ENCODE measurements at regions of chr6 and their contacts with region 1.

Region 1: DNA sequence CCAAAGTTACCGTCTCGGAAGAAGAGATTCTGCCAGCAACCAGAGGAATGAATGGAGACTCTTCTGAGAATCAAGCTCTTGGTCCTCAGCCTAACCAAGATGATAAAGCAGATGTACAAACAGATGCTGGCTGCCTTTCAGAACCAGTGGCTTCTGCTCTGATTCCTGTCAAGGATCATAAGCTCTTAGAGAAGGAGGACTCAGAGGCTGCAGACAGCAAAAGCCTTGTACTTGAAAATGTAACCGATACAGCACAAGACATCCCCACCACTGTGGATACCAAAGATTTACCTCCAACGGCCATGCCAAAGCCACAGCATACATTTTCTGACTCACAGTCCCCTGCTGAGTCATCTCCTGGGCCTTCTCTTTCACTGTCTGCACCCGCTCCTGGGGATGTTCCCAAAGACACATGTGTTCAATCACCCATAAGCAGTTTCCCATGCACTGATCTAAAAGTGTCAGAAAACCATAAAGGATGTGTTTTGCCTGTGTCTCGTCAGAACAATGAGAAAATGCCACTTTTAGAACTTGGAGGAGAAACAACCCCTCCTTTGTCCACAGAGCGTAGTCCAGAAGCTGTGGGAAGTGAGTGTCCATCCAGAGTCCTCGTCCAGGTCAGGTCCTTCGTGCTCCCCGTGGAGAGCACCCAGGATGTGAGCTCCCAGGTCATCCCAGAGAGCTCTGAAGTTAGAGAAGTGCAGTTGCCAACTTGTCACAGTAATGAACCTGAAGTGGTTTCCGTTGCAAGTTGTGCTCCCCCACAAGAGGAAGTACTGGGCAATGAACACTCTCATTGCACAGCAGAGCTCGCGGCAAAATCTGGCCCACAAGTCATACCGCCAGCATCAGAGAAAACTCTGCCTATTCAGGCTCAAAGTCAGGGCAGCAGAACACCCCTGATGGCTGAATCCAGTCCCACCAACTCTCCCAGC is 109.6 kb downstream of the RTN4IP1 start:
- DNase-seq: peak; percentile 79
- H3K4me3 Mint-ChIP-seq: peak overlapping the region; percentile 90
- H3K27ac Mint-ChIP-seq: peak overlapping the region; percentile 97
- H3K4me1 Mint-ChIP-seq: peaks cover 57% of the 10 kb centered on the region
- H3K27me3 Mint-ChIP-seq: no peaks in the 10 kb centered on the region

Region 2: DNA sequence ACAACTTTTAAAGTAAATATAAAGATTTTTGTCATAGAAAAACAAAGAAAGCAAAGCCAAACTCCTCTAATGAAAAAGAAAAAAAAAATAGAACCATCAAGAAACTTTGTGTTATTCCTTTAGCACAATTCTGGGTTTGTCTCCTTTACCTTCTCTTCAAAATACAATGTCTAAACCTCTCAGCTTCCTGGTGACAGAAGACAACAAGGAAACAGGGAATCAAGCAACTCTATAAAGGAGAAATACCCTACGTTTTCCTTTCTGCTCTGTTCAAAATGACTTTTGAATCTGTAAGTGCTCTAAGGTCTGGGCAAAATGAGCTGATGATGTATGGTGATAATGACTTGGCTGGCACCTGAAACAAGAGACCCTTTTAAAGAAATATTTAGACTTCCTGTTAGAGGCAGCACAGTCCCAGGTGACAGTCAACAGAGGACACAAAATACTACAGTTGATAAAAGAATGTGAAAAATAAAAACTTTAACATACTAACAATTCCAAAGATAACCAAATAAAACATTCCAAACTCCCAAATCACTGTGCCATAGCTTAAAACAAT is 332.2 kb before region 1 on chr6:
- intact Hi-C with region 1: loop called (anchors 2 kb)
- DNase-seq: no peak
- H3K4me3 Mint-ChIP-seq: peak overlapping the region; percentile 48
- H3K27ac Mint-ChIP-seq: peak overlapping the region; percentile 86
- H3K4me1 Mint-ChIP-seq: peaks cover 68% of the 10 kb centered on the region
- H3K27me3 Mint-ChIP-seq: no peaks in the 10 kb centered on the region

Region 3: GRCh38 chr6:106488494-106489370 is 31.0 kb before region 1 on chr6:
- intact Hi-C with region 1: no loop called
- DNase-seq: no peak
- H3K4me3 Mint-ChIP-seq: no peak overlapping the region
- H3K27ac Mint-ChIP-seq: no peak overlapping the region
- H3K4me1 Mint-ChIP-seq: peaks cover 2% of the 10 kb centered on the region
- H3K27me3 Mint-ChIP-seq: peaks cover 11% of the 10 kb centered on the region

Region 4: DNA sequence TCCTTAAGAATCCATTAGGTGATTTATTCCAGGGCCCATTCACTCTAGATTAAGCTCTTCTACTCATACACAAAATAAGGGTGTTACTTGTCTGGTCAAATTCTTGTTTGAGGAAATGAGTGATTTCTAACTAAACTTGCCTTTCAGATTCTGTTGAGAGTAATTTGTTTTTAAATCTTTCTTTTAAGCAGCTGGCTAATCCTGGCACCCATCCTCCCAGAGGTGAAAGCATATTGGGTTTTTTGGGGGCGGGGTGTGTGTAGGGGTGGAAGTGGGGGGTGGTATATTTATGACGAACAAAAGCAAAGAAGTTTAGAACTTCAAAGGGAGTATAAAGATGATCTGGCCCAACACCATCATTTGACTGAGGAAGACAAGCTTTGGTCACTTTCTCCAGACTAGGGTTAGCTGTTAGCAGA is 14.8 kb after region 1 on chr6:
- intact Hi-C with region 1: loop called (anchors 1 kb)
- DNase-seq: no peak
- H3K4me3 Mint-ChIP-seq: peak overlapping the region; percentile 9
- H3K27ac Mint-ChIP-seq: peak overlapping the region; percentile 82
- H3K4me1 Mint-ChIP-seq: peaks cover 70% of the 10 kb centered on the region
- H3K27me3 Mint-ChIP-seq: no peaks in the 10 kb centered on the region

Region 5: DNA sequence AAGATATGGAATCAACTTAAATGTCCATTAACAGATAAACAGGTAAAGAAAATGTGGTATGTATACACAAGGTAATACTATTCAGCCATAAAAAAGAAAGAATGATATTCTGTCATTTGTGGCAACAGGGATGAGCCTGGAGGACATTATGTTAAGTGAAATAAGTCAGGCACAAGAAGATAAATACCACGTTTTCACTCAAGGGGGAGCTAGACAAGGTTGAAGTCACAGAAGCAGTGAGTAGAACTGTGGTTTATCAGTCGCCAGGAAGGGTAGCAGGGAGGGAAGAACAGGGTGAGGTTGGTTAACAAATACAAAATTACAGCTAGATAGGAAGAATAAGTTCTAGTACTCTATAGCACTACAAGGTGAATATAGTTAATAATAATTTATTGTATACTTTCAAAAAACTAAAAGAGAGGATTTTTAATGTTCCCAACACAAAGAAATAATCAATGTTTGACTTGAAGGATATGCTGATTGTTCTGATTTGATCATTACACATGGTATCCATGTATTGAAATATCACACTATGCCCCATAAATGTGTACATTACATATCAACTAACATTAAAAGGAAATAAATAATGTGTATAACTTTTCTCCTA is 88.4 kb after region 1 on chr6:
- intact Hi-C with region 1: loop called (anchors 5 kb)
- DNase-seq: peak; percentile 18
- H3K4me3 Mint-ChIP-seq: no peak overlapping the region
- H3K27ac Mint-ChIP-seq: no peak overlapping the region
- H3K4me1 Mint-ChIP-seq: peaks cover 29% of the 10 kb centered on the region
- H3K27me3 Mint-ChIP-seq: no peaks in the 10 kb centered on the region

Measured in activated T-helper 2 cell treated with anti-CD3 and anti-CD28 coated beads, Interferon-gamma antibody, Interleukin-2, Interleukin-4, amounts not matched to agents 10 μg/mL and 5 μg/mL and 100 μg/mL, durations not matched to agents 14 hours and 24 hours and 36 hours (primary cell).